ENCODE measurements at regions of chr20 and their contacts with region 1.

Region 1: GRCh38 chr20:56468316-56469082 is at the start of gene RTF2:
- DNase-seq: peak; percentile 99
- total RNA-seq, gene RTF2: 68.2 to 68.7 TPM

Region 2: GRCh38 chr20:56392282-56393137 is 76.0 kb before region 1 on chr20 and contains the start of gene CSTF1:
- intact Hi-C with region 1: loop called in 1 of 2 experiments (anchors 10 kb)
- DNase-seq: peak; percentile 100
- total RNA-seq, gene CSTF1: 18.5 to 19.0 TPM

Region 3: DNA sequence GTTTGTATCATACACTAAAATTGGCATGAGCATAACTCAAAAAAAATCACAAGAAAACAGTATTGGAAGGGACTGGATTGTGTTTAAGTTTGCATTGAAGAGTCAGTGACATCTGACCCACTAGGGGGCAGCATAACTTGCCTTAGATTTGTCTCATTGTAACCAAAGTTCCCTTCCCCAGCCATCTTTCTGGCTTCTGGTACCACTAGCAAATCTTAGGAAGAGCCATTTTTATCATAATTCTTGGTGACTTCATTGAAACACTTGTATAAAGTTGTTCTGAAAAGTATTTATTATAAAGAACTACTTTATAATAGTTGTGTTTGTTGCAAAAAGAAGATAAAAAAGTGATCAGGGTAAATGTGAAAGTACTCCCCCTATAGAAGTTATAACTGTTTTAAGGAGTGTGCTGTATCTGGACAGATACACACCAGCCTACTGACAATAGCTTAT is 68.4 kb before region 1 on chr20:
- intact Hi-C with region 1: loop called (anchors 10 kb)
- DNase-seq: no peak

Region 4: GRCh38 chr20:57611586-57612311 is 1143.2 kb after region 1 on chr20:
- intact Hi-C with region 1: no loop called
- DNase-seq: peak; percentile 58